Activated CD8-positive, alpha-beta T cell treated with anti-CD3 and anti-CD28 coated beads for 36 hours (primary cell): ENCODE measurements at regions of chr14 and their contacts with region 1.

Region 1: DNA sequence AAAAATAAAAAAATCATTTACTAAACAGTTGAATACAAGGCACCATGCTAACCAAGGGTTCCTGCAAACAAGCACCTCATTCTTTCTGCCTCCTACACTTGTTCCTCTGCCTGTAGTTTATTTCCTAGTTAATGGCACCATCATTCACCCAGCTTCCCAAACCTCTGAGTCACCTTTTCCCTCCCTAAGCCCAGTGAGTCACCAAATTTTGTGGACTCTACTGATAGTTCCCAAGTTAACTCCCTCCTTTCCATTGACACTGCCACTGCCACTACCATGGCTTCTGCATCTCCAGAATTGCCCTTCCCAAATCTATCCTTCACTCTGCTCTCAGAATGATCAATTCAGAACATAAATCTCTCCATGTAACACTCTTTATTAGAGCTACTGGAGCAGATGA is 2.0 kb upstream of the GARIN2 start:
- DNase-seq: no peak
- ATAC-seq: no peak
- H3K4me3 Mint-ChIP-seq: no peak overlapping the region
- H3K27ac Mint-ChIP-seq: no peak overlapping the region
- H3K4me1 Mint-ChIP-seq: peaks cover 18% of the 10 kb centered on the region
- H3K27me3 Mint-ChIP-seq: no peaks in the 10 kb centered on the region
- CTCF ChIP-seq: no peak

Region 2: GRCh38 chr14:66842911-66843512 is 344.2 kb before region 1 on chr14:
- CTCF ChIA-PET with region 1: no interaction called
- POLR2A ChIA-PET with region 1: no interaction called
- intact Hi-C with region 1: no loop called
- DNase-seq: no peak
- ATAC-seq: no peak
- H3K4me3 Mint-ChIP-seq: no peak overlapping the region
- H3K27ac Mint-ChIP-seq: no peak overlapping the region
- H3K4me1 Mint-ChIP-seq: no peaks in the 10 kb centered on the region
- H3K27me3 Mint-ChIP-seq: no peaks in the 10 kb centered on the region
- CTCF ChIP-seq: no peak

Region 3: GRCh38 chr14:67207810-67208209 is 20.6 kb after region 1 on chr14:
- CTCF ChIA-PET with region 1: no interaction called
- POLR2A ChIA-PET with region 1: no interaction called
- intact Hi-C with region 1: no loop called
- DNase-seq: no peak
- ATAC-seq: no peak
- H3K4me3 Mint-ChIP-seq: no peak overlapping the region
- H3K27ac Mint-ChIP-seq: no peak overlapping the region
- H3K4me1 Mint-ChIP-seq: peaks cover 3% of the 10 kb centered on the region
- H3K27me3 Mint-ChIP-seq: no peaks in the 10 kb centered on the region
- CTCF ChIP-seq: no peak

Region 4: DNA sequence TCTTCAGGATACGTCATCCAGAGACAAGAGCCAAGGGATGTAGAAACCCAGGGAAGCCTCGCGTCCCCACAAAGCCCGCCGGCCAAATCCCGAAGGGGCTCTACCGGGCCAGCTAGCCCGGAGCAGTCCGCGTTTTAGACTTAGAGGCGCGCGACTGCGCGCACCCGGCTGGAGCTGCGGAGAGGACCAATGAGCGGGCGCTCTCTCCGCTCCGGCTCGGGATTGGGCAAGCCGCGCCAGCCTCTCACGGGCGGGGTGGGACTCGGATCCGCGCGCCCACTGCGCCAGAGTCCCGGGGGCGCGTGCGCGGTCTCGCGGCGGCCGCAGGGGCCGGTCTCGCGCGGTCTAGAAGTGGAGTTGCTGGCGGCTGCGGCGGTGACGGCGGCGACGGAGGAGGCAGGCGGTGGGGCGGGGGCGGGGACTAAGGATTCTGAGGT is 53.8 kb after region 1 on chr14:
- CTCF ChIA-PET with region 1: no interaction called
- POLR2A ChIA-PET with region 1: no interaction called
- intact Hi-C with region 1: loop called (anchors 5 kb)
- DNase-seq: peak; percentile 96
- ATAC-seq: peak; percentile 96
- H3K4me3 Mint-ChIP-seq: peak overlapping the region; percentile 82
- H3K27ac Mint-ChIP-seq: peak overlapping the region; percentile 87
- H3K4me1 Mint-ChIP-seq: peaks cover 20% of the 10 kb centered on the region
- H3K27me3 Mint-ChIP-seq: peaks cover 9% of the 10 kb centered on the region
- CTCF ChIP-seq: no peak

Region 5: DNA sequence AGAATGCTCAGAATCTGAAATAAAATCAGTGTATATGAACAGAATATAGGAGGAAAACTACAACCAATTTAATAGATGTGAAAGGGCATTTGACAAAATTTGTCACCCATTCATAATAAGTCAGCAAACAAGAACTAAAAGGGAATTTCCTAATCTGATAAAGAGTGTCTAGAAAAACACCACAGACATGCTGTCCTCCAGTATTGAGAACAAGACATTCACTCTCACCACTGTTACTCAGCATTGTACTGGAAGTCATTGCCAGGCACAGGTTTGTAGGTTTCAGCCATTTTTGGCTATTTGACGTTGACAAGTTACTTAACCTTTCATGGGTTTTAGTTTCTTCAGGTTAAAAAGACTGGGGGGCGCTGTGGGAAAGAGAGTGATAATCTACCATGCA is 186.1 kb after region 1 on chr14:
- CTCF ChIA-PET with region 1: no interaction called
- POLR2A ChIA-PET with region 1: no interaction called
- intact Hi-C with region 1: no loop called
- DNase-seq: peak; percentile 16
- ATAC-seq: peak; percentile 81
- H3K4me3 Mint-ChIP-seq: no peak overlapping the region
- H3K27ac Mint-ChIP-seq: peak overlapping the region; percentile 30
- H3K4me1 Mint-ChIP-seq: peaks cover 43% of the 10 kb centered on the region
- H3K27me3 Mint-ChIP-seq: no peaks in the 10 kb centered on the region
- CTCF ChIP-seq: no peak